Naive thymus-derived CD4-positive, alpha-beta T cell (primary cell): ENCODE measurements at regions of chr2 and their contacts with region 1.

Region 1: DNA sequence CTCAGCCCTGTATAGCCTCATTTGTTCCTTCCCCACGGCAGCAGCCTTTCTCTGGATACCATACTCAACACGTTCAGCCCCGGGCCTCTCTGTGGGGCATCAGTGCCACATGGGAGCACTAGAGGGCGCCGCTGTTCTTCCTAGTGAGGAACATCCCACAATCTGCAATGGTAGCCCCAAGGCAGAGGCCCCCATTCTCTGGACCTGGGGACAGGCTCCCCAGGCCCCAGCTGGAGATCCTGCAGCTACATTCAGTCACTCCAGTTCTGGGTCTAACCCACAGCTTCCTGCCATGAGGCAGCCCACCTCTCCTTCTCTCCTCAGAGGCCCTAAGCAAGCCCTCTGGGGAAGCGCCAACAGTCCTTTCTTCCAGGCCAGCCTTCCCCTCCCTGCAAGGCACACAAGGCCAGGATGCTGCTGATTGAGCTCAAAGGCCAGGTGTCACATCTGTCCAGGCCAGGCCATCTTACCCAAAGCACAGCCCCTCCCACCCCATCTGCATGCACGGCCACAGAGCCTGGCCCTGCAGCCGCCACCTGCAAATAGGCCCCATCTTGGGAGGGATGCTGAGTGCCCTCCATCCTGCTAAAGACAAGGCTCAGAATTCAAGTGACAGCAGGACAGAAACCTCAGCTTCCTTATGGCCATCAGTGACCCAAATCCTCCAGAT is 14.3 kb upstream of the SFXN5 start:
- DNase-seq: peak; percentile 52 to 79 (median 71)
- ATAC-seq: peak; percentile 92
- H3K4me3 ChIP-seq: no peak overlapping the region
- H3K4me3 Mint-ChIP-seq: no peak overlapping the region
- H3K27ac ChIP-seq: no peak overlapping the region
- H3K27ac Mint-ChIP-seq: peak overlapping the region in 1 of 9 donors; percentile 13
- H3K4me1 ChIP-seq: no peaks in the 10 kb centered on the region
- H3K4me1 Mint-ChIP-seq: peaks cover 0 to 2% (median 0%) of the 10 kb centered on the region in 7 donors
- H3K27me3 ChIP-seq: no peaks in the 10 kb centered on the region
- H3K27me3 Mint-ChIP-seq: no peaks in the 10 kb centered on the region

Region 2: GRCh38 chr2:72024451-72025175 is 1061.2 kb before region 1 on chr2:
- CTCF ChIA-PET with region 1: no interaction called
- POLR2A ChIA-PET with region 1: no interaction called
- intact Hi-C with region 1: no loop called
- DNase-seq: peak in 1 of 9 donors; percentile 10
- ATAC-seq: no peak
- H3K4me3 ChIP-seq: no peak overlapping the region
- H3K4me3 Mint-ChIP-seq: no peak overlapping the region
- H3K27ac ChIP-seq: no peak overlapping the region
- H3K27ac Mint-ChIP-seq: no peak overlapping the region
- H3K4me1 ChIP-seq: no peaks in the 10 kb centered on the region
- H3K4me1 Mint-ChIP-seq: no peaks in the 10 kb centered on the region
- H3K27me3 ChIP-seq: no peaks in the 10 kb centered on the region
- H3K27me3 Mint-ChIP-seq: peaks cover 0 to 16% (median 0%) of the 10 kb centered on the region in 5 donors

Region 3: GRCh38 chr2:72993147-72993932 is 92.5 kb before region 1 on chr2:
- CTCF ChIA-PET with region 1: interaction called, 5 read pairs
- POLR2A ChIA-PET with region 1: no interaction called
- intact Hi-C with region 1: loop called in 1 of 2 experiments (anchors 5 kb)
- DNase-seq: peak; percentile 14 to 68 (median 42)
- ATAC-seq: peak; percentile 71
- H3K4me3 ChIP-seq: no peak overlapping the region
- H3K4me3 Mint-ChIP-seq: no peak overlapping the region
- H3K27ac ChIP-seq: no peak overlapping the region
- H3K27ac Mint-ChIP-seq: no peak overlapping the region
- H3K4me1 ChIP-seq: no peaks in the 10 kb centered on the region
- H3K4me1 Mint-ChIP-seq: peaks cover 0 to 9% (median 0%) of the 10 kb centered on the region in 7 donors
- H3K27me3 ChIP-seq: no peaks in the 10 kb centered on the region
- H3K27me3 Mint-ChIP-seq: no peaks in the 10 kb centered on the region

Region 4: GRCh38 chr2:73156539-73157124 is 70.8 kb after region 1 on chr2:
- CTCF ChIA-PET with region 1: interaction called, 31 read pairs
- POLR2A ChIA-PET with region 1: no interaction called
- intact Hi-C with region 1: loop called in 1 of 2 experiments (anchors 1 kb)
- DNase-seq: peak in 3 of 9 donors; percentile 12 to 19 (median 16)
- ATAC-seq: peak; percentile 57
- H3K4me3 ChIP-seq: no peak overlapping the region
- H3K4me3 Mint-ChIP-seq: no peak overlapping the region
- H3K27ac ChIP-seq: no peak overlapping the region
- H3K27ac Mint-ChIP-seq: peak overlapping the region in 1 of 9 donors; percentile 75
- H3K4me1 ChIP-seq: no peaks in the 10 kb centered on the region
- H3K4me1 Mint-ChIP-seq: peaks cover 0 to 4% (median 0%) of the 10 kb centered on the region in 7 donors
- H3K27me3 ChIP-seq: peaks cover 0 to 6% of the 10 kb centered on the region in 2 donors
- H3K27me3 Mint-ChIP-seq: peaks cover 21 to 47% (median 35%) of the 10 kb centered on the region in 5 donors

Region 5: DNA sequence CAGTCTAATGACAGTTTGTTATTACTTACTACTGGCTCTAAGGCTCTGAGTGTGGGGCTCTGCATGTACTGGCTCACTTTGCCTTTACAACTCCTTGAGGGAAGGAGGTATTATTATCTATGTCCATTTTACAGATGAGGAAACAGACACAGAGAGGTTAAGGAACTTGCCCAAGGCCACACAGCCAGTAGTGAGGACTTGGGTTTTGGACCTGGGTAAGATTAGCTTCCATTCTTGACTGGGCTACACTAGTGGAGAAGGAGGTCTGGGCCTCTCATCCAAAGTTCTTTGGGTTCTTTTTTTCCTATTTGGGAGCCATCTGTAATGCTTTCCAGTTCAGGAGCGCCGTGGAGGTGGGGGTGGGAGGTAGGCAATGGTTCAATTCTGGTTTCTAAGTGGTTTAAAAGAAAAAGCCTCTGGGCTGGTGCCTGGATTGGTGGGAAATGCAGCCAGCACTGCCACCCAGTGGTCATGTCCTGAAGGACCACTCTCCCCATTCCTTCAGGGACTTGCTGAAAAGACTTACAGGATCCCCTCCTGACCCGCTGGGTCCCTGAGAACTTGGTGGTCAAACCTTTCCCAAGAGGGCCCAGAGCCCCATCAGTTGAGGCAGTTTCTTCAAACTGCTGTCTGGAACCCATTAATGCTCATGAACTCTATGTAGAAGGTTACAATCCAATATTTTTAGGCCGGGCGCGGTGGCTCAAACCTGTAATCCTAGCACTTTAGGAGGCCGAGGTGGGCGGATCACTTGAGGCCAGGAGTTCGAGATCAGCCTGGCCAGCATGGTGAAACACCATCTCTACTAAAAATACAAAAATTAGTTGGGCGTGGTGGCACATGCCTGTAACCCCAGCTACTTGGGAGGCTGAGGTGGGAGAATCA is 77.9 kb after region 1 on chr2:
- CTCF ChIA-PET with region 1: interaction called, 31 read pairs
- POLR2A ChIA-PET with region 1: no interaction called
- intact Hi-C with region 1: loop called (anchors 1 kb)
- DNase-seq: peak; percentile 31 to 66 (median 54)
- ATAC-seq: peak; percentile 88
- H3K4me3 ChIP-seq: no peak overlapping the region
- H3K4me3 Mint-ChIP-seq: no peak overlapping the region
- H3K27ac ChIP-seq: no peak overlapping the region
- H3K27ac Mint-ChIP-seq: no peak overlapping the region
- H3K4me1 ChIP-seq: no peaks in the 10 kb centered on the region
- H3K4me1 Mint-ChIP-seq: peaks cover 0 to 1% (median 0%) of the 10 kb centered on the region in 7 donors
- H3K27me3 ChIP-seq: no peaks in the 10 kb centered on the region
- H3K27me3 Mint-ChIP-seq: peaks cover 0 to 16% (median 11%) of the 10 kb centered on the region in 5 donors